ENCODE measurements at regions of chr19 and their contacts with region 1.

Region 1: DNA sequence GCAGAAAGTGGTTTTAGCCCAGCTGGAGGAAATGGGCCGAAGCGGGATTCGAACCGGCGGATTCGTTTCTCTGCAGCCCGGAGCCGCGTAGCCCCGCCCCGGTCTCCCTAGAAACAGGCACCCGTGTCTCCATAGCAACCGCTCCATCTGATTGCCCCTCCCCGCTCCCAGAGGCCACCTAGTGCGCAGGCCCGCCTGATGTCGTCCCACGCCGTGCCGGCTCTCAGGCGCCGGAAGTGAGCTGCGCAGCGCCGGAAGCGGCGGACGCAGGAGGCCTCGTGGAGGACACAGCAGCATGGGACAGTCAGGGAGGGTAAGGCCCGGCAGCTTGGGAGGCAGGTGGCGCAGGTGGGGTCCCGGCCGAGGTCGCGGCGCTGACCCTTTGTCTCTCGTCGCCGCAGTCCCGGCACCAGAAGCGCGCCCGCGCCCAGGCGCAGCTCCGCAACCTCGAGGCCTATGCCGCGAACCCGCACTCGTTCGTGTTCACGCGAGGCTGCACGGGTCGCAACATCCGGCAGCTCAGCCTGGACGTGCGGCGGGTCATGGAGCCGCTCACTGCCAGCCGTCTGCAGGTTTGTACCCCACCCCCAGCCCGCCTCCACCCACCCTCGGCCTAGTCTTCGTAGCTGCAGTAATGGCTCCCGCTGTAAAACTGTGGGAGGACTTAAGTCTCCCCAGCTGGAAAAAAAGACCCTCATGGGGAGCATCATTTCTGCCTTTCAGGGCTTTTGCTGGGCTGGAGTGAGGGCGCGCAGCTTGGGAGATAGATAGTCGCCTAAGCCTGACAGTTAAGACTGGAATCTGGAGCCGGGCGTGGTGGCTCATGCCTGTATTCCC is at the start of gene PPAN:
- DNase-seq: peak; percentile 95 to 99 (median 98)
- ATAC-seq: peak; percentile 63
- H3K4me3 ChIP-seq: peak within 1 kb of the TSS; percentile 53 to 74
- H3K4me3 Mint-ChIP-seq: peak within 1 kb of the TSS; percentile 89
- H3K27ac ChIP-seq: peak within 1 kb of the TSS; percentile 91 to 93
- H3K27ac Mint-ChIP-seq: peak within 1 kb of the TSS; percentile 93
- H3K4me1 ChIP-seq: peaks cover 61% of the 10 kb centered on the region
- H3K4me1 Mint-ChIP-seq: peaks cover 57% of the 10 kb centered on the region
- H3K27me3 ChIP-seq: no peaks in the 10 kb centered on the region
- H3K27me3 Mint-ChIP-seq: no peaks in the 10 kb centered on the region
- CTCF ChIP-seq: no peak
- total RNA-seq, gene PPAN: 97.6 to 114 TPM

Region 2: GRCh38 chr19:9834726-9835506 is 271.4 kb before region 1 on chr19 and contains the start of gene PIN1:
- CTCF ChIA-PET with region 1: no interaction called
- POLR2A ChIA-PET with region 1: no interaction called
- intact Hi-C with region 1: loop called (anchors 10 kb)
- DNase-seq: peak; percentile 98 to 100 (median 99)
- ATAC-seq: peak; percentile 95
- H3K4me3 ChIP-seq: peak within 1 kb of the TSS; percentile 71 to 94
- H3K4me3 Mint-ChIP-seq: peak within 1 kb of the TSS; percentile 90
- H3K27ac ChIP-seq: peak within 1 kb of the TSS; percentile 78 to 80
- H3K27ac Mint-ChIP-seq: peak within 1 kb of the TSS; percentile 94
- H3K4me1 ChIP-seq: peaks cover 15% of the 10 kb centered on the region
- H3K4me1 Mint-ChIP-seq: peaks cover 22% of the 10 kb centered on the region
- H3K27me3 ChIP-seq: no peaks in the 10 kb centered on the region
- H3K27me3 Mint-ChIP-seq: no peaks in the 10 kb centered on the region
- CTCF ChIP-seq: no peak
- total RNA-seq, gene PIN1: 42.4 to 42.7 TPM

Region 3: GRCh38 chr19:10010247-10010691 is 96.0 kb before region 1 on chr19 and contains the start of gene COL5A3:
- CTCF ChIA-PET with region 1: no interaction called
- POLR2A ChIA-PET with region 1: no interaction called
- intact Hi-C with region 1: no loop called
- DNase-seq: no peak
- ATAC-seq: no peak
- H3K4me3 ChIP-seq: no peak within 1 kb of the TSS
- H3K4me3 Mint-ChIP-seq: peak within 1 kb of the TSS; percentile 35
- H3K27ac ChIP-seq: no peak within 1 kb of the TSS
- H3K27ac Mint-ChIP-seq: peak within 1 kb of the TSS; percentile 19
- H3K4me1 ChIP-seq: peaks cover 11% of the 10 kb centered on the region
- H3K4me1 Mint-ChIP-seq: peaks cover 20% of the 10 kb centered on the region
- H3K27me3 ChIP-seq: peaks cover 19 to 20% of the 10 kb centered on the region in 2 experiments
- H3K27me3 Mint-ChIP-seq: peaks cover 47% of the 10 kb centered on the region
- CTCF ChIP-seq: no peak
- total RNA-seq, gene COL5A3: 0.94 to 1.2 TPM

Region 4: GRCh38 chr19:10061717-10062310 is 44.5 kb before region 1 on chr19:
- CTCF ChIA-PET with region 1: no interaction called
- POLR2A ChIA-PET with region 1: no interaction called
- intact Hi-C with region 1: no loop called
- DNase-seq: no peak
- ATAC-seq: no peak
- H3K4me3 ChIP-seq: no peak overlapping the region
- H3K4me3 Mint-ChIP-seq: no peak overlapping the region
- H3K27ac ChIP-seq: no peak overlapping the region
- H3K27ac Mint-ChIP-seq: no peak overlapping the region
- H3K4me1 ChIP-seq: no peaks in the 10 kb centered on the region
- H3K4me1 Mint-ChIP-seq: no peaks in the 10 kb centered on the region
- H3K27me3 ChIP-seq: peaks cover 0 to 5% of the 10 kb centered on the region in 2 experiments
- H3K27me3 Mint-ChIP-seq: peaks cover 29% of the 10 kb centered on the region
- CTCF ChIP-seq: no peak

Region 5: GRCh38 chr19:10095948-10096621 is 10.2 kb before region 1 on chr19:
- CTCF ChIA-PET with region 1: interaction called, 71 read pairs
- POLR2A ChIA-PET with region 1: interaction called, 20 read pairs
- intact Hi-C with region 1: loop called in 1 of 2 experiments (anchors 1 kb)
- DNase-seq: peak; percentile 79 to 97 (median 90)
- ATAC-seq: peak; percentile 96
- H3K4me3 ChIP-seq: peak overlapping the region; percentile 41 to 67
- H3K4me3 Mint-ChIP-seq: peak overlapping the region; percentile 29
- H3K27ac ChIP-seq: peak overlapping the region; percentile 62 to 70
- H3K27ac Mint-ChIP-seq: peak overlapping the region; percentile 45
- H3K4me1 ChIP-seq: peaks cover 24% of the 10 kb centered on the region
- H3K4me1 Mint-ChIP-seq: peaks cover 18% of the 10 kb centered on the region
- H3K27me3 ChIP-seq: no peaks in the 10 kb centered on the region
- H3K27me3 Mint-ChIP-seq: no peaks in the 10 kb centered on the region
- CTCF ChIP-seq: no peak

Region 6: GRCh38 chr19:10142701-10143375 is 36.5 kb after region 1 on chr19:
- CTCF ChIA-PET with region 1: interaction called, 4 read pairs
- POLR2A ChIA-PET with region 1: interaction called, 13 read pairs
- intact Hi-C with region 1: loop called in 1 of 2 experiments (anchors 5 kb)
- DNase-seq: peak; percentile 19 to 86 (median 58)
- ATAC-seq: peak; percentile 94
- H3K4me3 ChIP-seq: peak overlapping the region; percentile 11 to 45
- H3K4me3 Mint-ChIP-seq: peak overlapping the region; percentile 76
- H3K27ac ChIP-seq: peak overlapping the region; percentile 80 to 94
- H3K27ac Mint-ChIP-seq: peak overlapping the region; percentile 98
- H3K4me1 ChIP-seq: peaks cover 45% of the 10 kb centered on the region
- H3K4me1 Mint-ChIP-seq: peaks cover 42% of the 10 kb centered on the region
- H3K27me3 ChIP-seq: no peaks in the 10 kb centered on the region
- H3K27me3 Mint-ChIP-seq: no peaks in the 10 kb centered on the region
- CTCF ChIP-seq: peak; percentile 29

Region 7: GRCh38 chr19:10155839-10156238 is 49.5 kb after region 1 on chr19:
- CTCF ChIA-PET with region 1: no interaction called
- POLR2A ChIA-PET with region 1: no interaction called
- intact Hi-C with region 1: no loop called
- DNase-seq: no peak
- ATAC-seq: no peak
- H3K4me3 ChIP-seq: no peak overlapping the region
- H3K4me3 Mint-ChIP-seq: no peak overlapping the region
- H3K27ac ChIP-seq: no peak overlapping the region
- H3K27ac Mint-ChIP-seq: peak overlapping the region; percentile 6
- H3K4me1 ChIP-seq: no peaks in the 10 kb centered on the region
- H3K4me1 Mint-ChIP-seq: no peaks in the 10 kb centered on the region
- H3K27me3 ChIP-seq: no peaks in the 10 kb centered on the region
- H3K27me3 Mint-ChIP-seq: no peaks in the 10 kb centered on the region
- CTCF ChIP-seq: no peak

Region 8: DNA sequence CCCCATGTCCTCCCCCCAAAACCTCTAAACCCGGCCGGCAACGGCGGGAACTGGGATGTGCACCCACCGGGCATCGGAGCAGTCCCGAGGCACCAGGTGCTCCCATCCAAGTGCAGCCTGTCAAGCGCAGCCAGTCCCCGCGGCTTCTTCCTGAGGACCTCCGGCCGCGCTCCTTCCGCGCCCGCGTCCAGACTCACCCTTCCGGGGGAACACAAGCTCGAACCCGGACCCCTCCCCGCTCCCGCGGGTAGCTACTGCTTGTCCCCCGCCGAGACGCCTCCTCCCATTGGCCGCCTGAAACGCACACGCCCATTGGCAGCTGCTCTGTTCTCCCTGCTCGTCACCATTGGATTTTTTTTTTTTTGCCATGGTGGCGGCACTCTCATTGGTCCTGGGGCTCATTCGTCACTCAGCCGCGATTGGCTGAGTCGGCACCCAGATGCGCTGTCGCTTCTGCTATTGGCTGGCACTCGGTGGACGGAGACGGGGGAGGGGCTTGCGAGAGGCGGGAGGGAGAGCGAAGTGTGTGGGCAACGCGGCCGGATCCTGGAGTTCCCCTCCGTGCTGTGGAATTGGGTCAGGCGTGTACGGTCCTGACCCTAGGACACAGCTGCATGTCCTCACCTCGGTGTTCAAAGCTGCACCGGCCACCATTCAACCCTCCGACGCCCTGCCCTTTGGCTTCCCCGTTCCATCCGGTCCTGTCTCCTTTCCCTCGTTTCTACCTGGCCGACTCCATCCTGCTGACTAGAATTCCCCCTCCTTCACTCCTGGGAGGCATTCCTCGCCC is 274.2 kb after region 1 on chr19 and contains the start of gene TYK2:
- CTCF ChIA-PET with region 1: no interaction called
- POLR2A ChIA-PET with region 1: no interaction called
- intact Hi-C with region 1: loop called in 1 of 2 experiments (anchors 2 kb)
- DNase-seq: peak; percentile 91 to 99 (median 96)
- ATAC-seq: peak; percentile 98
- H3K4me3 ChIP-seq: peak within 1 kb of the TSS; percentile 73 to 84
- H3K4me3 Mint-ChIP-seq: peak within 1 kb of the TSS; percentile 96
- H3K27ac ChIP-seq: peak within 1 kb of the TSS; percentile 76 to 88
- H3K27ac Mint-ChIP-seq: peak within 1 kb of the TSS; percentile 96
- H3K4me1 ChIP-seq: peaks cover 9% of the 10 kb centered on the region
- H3K4me1 Mint-ChIP-seq: peaks cover 22% of the 10 kb centered on the region
- H3K27me3 ChIP-seq: no peaks in the 10 kb centered on the region
- H3K27me3 Mint-ChIP-seq: no peaks in the 10 kb centered on the region
- CTCF ChIP-seq: no peak
- total RNA-seq, gene TYK2: 244 to 250 TPM

Region 9: DNA sequence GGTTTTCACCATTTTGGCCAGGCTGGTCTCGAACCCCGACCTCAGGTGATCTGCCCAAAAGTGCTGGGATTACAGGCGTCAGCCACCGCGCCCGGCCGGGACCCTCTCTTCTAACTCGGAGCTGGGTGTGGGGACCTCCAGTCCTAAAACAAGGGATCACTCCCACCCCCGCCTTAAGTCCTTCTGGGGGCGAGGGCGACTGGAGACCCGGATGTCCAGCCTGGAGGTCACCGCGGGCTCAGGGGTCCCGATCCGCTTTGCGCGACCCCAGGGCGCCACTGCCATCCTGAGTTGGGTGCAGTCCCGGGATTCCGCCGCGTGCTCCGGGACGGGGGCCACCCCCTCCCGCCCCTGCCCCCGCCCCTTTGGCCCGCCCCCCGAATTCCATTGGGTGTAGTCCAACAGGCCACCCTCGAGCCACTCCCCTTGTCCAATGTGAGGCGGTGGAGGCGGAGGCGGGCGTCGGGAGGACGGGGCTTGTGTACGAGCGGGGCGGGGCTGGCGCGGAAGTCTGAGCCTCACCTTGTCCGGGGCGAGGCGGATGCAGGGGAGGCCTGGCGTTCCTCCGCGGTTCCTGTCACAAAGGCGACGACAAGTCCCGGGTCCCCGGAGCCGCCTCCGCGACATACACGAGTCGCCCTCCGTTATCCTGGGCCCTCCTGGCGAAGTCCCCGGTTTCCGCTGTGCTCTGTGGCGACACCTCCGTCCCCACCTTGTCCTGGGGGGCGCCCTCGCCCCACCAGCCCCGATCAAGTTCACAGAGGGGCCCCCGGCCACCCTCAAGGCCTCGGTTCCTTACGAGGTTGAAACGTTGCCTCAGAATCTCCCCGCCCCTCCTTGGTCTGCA is 984.0 kb after region 1 on chr19:
- CTCF ChIA-PET with region 1: no interaction called
- POLR2A ChIA-PET with region 1: no interaction called
- intact Hi-C with region 1: loop called in 1 of 2 experiments (anchors 10 kb)
- DNase-seq: peak; percentile 95 to 98 (median 98)
- ATAC-seq: peak; percentile 84
- H3K4me3 ChIP-seq: peak overlapping the region; percentile 78 to 93
- H3K4me3 Mint-ChIP-seq: peak overlapping the region; percentile 86
- H3K27ac ChIP-seq: peak overlapping the region; percentile 97 to 99
- H3K27ac Mint-ChIP-seq: peak overlapping the region; percentile 96
- H3K4me1 ChIP-seq: peaks cover 44% of the 10 kb centered on the region
- H3K4me1 Mint-ChIP-seq: peaks cover 47% of the 10 kb centered on the region
- H3K27me3 ChIP-seq: no peaks in the 10 kb centered on the region
- H3K27me3 Mint-ChIP-seq: no peaks in the 10 kb centered on the region
- CTCF ChIP-seq: no peak